ENCODE measurements at regions of chr4 and their contacts with region 1.

Region 1: DNA sequence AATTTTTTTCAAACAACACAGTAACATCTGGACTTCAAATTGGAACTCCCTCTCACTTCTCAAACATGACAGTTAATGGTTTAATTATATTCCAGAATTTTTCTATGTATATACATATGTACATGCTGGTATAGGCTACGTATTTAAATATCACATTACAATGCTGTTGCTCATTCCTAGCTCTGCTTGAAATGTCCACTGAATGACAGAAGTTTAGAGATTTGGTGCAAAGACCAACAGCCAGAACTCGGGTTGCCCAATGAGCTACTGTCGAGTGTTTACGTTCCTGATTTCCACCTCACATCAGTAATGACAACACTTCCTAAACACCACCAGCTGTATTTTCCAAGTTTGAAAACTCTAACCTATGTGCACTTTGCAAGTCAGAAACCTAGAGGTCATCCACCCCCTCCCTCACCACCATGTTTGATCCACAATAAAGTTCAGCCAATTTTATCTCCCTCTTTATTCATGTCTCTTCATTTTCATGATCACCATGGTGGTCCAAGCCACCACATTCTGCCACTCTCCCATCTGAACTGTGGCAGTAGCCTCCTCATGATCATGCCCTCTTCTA is 49.3 kb upstream of the RPL34 start:
- DNase-seq: no peak
- ATAC-seq: no peak
- H3K4me3 Mint-ChIP-seq: no peak overlapping the region
- H3K27ac Mint-ChIP-seq: no peak overlapping the region
- H3K4me1 Mint-ChIP-seq: peaks cover 23% of the 10 kb centered on the region
- H3K27me3 Mint-ChIP-seq: no peaks in the 10 kb centered on the region

Region 2: GRCh38 chr4:107793996-107794395 is 777.1 kb before region 1 on chr4:
- CTCF ChIA-PET with region 1: no interaction called
- POLR2A ChIA-PET with region 1: no interaction called
- intact Hi-C with region 1: no loop called
- DNase-seq: no peak
- ATAC-seq: no peak
- H3K4me3 Mint-ChIP-seq: no peak overlapping the region
- H3K27ac Mint-ChIP-seq: no peak overlapping the region
- H3K4me1 Mint-ChIP-seq: no peaks in the 10 kb centered on the region
- H3K27me3 Mint-ChIP-seq: peaks cover 9% of the 10 kb centered on the region

Region 3: DNA sequence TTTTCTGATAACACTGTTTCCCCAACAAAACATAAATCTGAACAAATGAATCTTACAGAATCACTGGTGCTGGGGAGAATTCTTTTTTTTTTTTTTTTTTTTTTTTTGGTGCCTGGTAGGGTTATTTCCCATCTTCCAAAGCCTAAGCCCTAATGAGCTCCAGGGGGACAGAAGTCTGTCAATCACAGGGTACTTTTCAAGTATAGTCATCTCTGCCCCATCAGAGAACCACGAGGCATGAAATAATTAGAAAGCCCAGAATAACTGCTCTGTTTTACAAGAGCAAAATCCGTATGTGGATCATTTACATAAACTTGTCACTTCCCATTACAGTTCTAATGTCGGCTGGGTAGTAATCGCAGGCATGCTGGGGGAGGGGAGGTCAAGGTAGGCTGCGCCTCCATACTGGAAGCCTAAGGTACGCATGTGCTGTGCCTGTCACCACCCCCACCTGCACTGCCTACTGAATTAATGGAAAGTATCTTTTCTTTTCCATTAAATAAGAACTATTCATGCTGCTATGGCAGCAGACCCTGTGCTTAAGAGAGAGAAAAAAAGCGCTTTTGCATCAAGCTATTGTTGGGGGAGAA is 237.6 kb before region 1 on chr4:
- CTCF ChIA-PET with region 1: no interaction called
- POLR2A ChIA-PET with region 1: no interaction called
- intact Hi-C with region 1: no loop called
- DNase-seq: no peak
- ATAC-seq: no peak
- H3K4me3 Mint-ChIP-seq: no peak overlapping the region
- H3K27ac Mint-ChIP-seq: no peak overlapping the region
- H3K4me1 Mint-ChIP-seq: peaks cover 10% of the 10 kb centered on the region
- H3K27me3 Mint-ChIP-seq: no peaks in the 10 kb centered on the region

Region 4: GRCh38 chr4:108512615-108513505 is 58.2 kb before region 1 on chr4:
- CTCF ChIA-PET with region 1: interaction called, 3 read pairs
- POLR2A ChIA-PET with region 1: interaction called, 10 read pairs
- intact Hi-C with region 1: no loop called
- DNase-seq: peak; percentile 64
- ATAC-seq: peak; percentile 95
- H3K4me3 Mint-ChIP-seq: peak overlapping the region; percentile 58
- H3K27ac Mint-ChIP-seq: peak overlapping the region; percentile 2
- H3K4me1 Mint-ChIP-seq: peaks cover 18% of the 10 kb centered on the region
- H3K27me3 Mint-ChIP-seq: peaks cover 2% of the 10 kb centered on the region

Region 5: GRCh38 chr4:108581083-108581482 is 10.0 kb after region 1 on chr4:
- CTCF ChIA-PET with region 1: interaction called, 21 read pairs
- POLR2A ChIA-PET with region 1: no interaction called
- intact Hi-C with region 1: no loop called
- DNase-seq: no peak
- ATAC-seq: no peak
- H3K4me3 Mint-ChIP-seq: no peak overlapping the region
- H3K27ac Mint-ChIP-seq: no peak overlapping the region
- H3K4me1 Mint-ChIP-seq: peaks cover 7% of the 10 kb centered on the region
- H3K27me3 Mint-ChIP-seq: no peaks in the 10 kb centered on the region

Region 6: GRCh38 chr4:108611365-108611764 is 40.3 kb after region 1 on chr4:
- CTCF ChIA-PET with region 1: no interaction called
- POLR2A ChIA-PET with region 1: no interaction called
- intact Hi-C with region 1: no loop called
- DNase-seq: no peak
- ATAC-seq: no peak
- H3K4me3 Mint-ChIP-seq: no peak overlapping the region
- H3K27ac Mint-ChIP-seq: no peak overlapping the region
- H3K4me1 Mint-ChIP-seq: peaks cover 11% of the 10 kb centered on the region
- H3K27me3 Mint-ChIP-seq: no peaks in the 10 kb centered on the region

Measured in activated CD4-positive, alpha-beta T cell treated with anti-CD3 and anti-CD28 coated beads for 36 hours (primary cell).